HCT116 (cell line): ENCODE measurements at regions of chr22 and their contacts with region 1.

Region 1: DNA sequence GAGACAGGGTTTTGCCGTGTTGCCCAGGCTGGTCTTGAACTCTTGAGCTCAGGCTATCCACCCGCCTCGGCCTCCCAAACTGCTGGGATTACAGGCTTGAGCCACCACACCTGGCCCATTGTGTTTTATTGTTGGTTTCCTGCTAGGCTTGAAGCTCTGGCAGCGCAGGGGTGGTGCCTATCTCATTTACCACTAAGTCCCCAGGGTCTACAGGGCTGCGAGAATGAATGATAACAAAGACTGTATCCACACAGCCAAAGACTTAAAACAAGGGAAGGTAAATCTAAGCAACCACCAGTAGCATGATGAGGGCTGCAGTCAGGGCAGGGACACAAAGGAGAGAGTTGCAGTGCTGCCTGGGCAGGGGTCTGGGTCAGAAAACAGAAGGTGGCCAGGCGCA is 37.3 kb upstream of the XBP1 start:
- DNase-seq: no peak
- ATAC-seq: no peak
- H3K4me3 ChIP-seq: no peak overlapping the region
- H3K27ac ChIP-seq: no peak overlapping the region
- H3K4me1 ChIP-seq: no peaks in the 10 kb centered on the region
- H3K27me3 ChIP-seq: no peaks in the 10 kb centered on the region
- CTCF ChIP-seq: no peak
- POLR2A ChIP-seq: no peak
- RAD21 ChIP-seq: no peak

Region 2: DNA sequence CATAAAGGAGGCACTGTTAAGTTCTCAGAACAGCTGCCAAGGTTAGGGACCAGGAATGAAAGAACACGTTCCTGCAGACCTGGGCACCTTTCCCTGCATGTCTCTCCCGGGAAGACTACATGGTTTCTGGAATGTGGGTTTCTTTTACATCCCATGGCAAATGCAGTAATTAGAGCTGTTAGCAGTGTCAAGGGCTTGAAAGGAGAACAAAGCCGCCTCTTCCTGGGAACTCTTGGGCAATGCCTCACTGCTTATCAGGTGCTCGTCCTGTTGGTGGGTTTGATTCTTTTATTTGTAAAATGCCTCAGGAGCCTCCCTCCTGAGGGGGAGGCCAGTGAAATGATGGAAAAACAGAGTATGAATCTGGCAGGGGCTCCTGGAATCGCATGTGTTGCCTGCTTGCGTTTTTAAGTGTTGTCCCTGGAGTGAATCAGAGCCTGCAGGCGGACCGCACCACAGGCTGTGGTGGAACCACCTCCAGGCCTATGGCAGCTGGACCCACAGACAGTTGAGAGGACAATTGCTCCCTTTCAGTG is 224.7 kb after region 1 on chr22:
- CTCF ChIA-PET with region 1: no interaction called
- POLR2A ChIA-PET with region 1: no interaction called
- RAD21 ChIA-PET with region 1: interaction called in 1 of 2 experiments, 14 read pairs
- intact Hi-C with region 1: no loop called
- DNase-seq: no peak
- ATAC-seq: no peak
- H3K4me3 ChIP-seq: no peak overlapping the region
- H3K27ac ChIP-seq: no peak overlapping the region
- H3K4me1 ChIP-seq: no peaks in the 10 kb centered on the region
- H3K27me3 ChIP-seq: no peaks in the 10 kb centered on the region
- CTCF ChIP-seq: no peak
- POLR2A ChIP-seq: no peak
- RAD21 ChIP-seq: no peak